Astrocyte of the cerebellum (primary cell): ENCODE measurements at regions of chr10 and their contacts with region 1.

Region 1: DNA sequence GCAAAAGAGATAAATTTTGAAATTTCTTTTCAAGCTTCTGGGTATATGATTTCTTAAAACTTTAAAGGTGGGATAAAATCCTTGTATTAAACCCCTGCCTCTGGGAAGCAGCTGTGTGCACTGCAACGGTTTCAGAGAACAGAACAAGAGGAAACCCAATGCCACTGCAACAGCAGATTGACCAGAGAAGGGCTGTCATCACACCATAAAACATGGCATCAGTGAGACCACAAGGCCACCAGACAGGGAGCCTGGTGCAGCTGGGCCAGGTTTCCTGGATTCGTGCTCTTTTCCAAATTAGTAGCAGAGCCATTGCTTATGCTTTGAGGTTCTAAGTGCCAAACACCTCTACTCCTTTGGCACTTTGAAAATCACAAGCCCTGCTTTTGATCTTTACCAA is 152.4 kb downstream of the PRPF18 start:
- DNase-seq: no peak
- H3K4me3 ChIP-seq: no peak overlapping the region
- CTCF ChIP-seq: no peak

Region 2: DNA sequence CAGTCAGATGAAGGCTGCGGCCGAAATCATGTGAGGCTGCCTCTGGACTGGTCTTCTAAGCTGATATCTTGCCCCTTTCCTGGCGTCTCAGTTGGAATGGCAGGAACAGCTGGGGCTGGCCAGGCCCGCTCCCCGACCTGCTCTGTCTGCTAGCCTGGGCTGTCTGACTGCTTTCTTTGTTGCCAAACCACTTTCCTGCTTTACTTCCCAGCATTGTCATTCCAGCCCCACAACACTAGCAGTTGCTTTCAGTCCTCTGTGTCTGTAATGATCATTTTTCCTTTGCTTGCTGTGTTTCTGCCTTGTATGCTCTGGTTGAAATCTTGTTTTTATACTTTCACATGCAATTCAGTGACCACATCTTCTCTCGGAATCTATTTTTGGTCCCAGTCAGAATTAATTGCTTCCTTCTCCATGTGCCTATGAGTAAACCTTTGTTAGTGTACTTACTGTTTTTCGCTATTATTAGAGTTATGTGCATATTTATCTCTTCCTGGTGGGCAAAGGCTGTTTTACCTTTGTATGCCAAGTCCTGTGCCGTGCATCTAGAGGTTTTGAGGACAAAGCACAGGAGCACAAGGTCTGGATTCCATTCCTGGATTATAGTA is 130.8 kb before region 1 on chr10:
- in situ Hi-C with region 1: no loop called
- DNase-seq: no peak
- H3K4me3 ChIP-seq: no peak overlapping the region
- CTCF ChIP-seq: no peak

Region 3: GRCh38 chr10:13659897-13660550 is 79.2 kb before region 1 on chr10:
- in situ Hi-C with region 1: no loop called
- DNase-seq: peak; percentile 58
- H3K4me3 ChIP-seq: no peak overlapping the region
- CTCF ChIP-seq: peak; percentile 88

Region 4: DNA sequence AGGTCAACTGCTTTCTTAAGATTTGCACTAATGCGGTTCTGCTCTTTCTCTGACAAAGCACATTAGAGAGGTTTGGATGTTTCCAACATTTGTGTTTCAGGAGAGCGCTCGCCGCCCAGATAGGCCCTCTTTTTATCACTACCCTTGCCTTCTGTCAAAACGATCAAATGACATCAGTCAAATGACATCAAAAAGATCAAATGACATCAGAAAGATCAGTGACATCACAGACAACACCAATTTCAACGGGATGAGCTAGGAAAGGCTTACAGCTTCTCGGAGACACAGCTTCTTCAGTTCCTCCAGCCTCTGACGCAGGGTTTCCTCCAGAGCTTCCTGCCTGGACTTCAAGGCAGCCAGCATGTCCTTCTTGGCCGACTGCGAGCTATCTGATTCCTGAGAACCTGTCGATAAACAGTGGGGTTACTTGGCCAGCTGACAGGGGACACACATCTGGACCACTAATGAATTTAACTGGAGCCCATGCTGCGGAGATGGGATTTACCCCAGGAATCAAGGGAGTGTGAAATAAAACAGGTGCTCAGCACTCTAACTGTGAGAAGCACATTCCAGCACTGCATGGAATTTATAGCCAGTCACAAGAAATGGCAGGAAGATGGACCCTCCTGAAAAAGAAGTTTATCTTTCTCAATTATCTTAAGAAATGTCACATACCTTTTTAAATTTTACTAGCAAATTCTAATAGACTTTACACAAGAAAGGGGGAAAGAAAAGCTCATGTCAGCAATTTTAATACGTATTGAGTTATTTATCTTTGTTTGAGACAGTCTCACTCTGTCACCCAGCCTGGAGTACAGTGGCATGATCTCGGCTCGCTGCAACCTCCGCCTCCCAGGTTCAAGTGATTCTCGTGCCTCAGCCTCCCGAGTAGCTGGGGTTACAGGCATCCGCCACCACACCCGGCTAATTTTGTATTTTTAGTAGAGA is 64.3 kb before region 1 on chr10:
- in situ Hi-C with region 1: loop called (anchors 5 kb)
- DNase-seq: no peak
- H3K4me3 ChIP-seq: no peak overlapping the region
- CTCF ChIP-seq: no peak